ENCODE measurements at regions of chr3 and their contacts with region 1.

Region 1: GRCh38 chr3:48400824-48401433 is 28.9 kb downstream of the FBXW12 start:
- DNase-seq: peak; percentile 89
- CTCF ChIP-seq: peak; percentile 67

Region 2: DNA sequence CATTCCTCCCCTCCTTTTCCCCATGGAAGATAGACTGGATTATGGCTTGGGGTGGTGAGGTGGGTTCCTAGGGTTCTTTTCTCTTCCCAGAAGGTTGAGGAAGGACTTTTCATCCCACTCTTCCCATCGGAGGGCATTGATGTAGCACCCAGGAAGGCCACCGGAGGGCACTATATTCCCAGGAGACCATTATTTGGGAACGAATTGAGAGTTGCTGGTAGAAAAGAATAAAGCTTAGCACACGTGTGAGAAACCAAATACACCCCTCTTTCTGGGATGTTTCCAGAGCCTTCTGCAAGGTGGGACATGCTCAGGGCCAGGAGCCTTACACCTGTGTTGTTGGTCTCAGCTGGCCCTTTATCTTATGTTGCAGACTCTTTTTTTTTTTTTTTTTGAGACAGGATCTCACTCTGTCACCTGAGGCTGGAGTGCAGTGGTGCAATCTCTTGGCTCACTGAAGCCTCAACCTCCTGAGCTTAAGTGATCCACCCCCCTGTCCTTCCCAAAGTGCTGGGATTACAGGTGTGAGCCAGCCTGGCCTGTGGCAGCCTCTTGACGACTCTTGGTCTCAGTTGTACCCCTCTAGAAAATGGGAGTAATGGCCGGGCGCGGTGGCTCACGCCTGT is 206.4 kb before region 1 on chr3:
- in situ Hi-C with region 1: loop called (anchors 10 kb)
- DNase-seq: peak; percentile 74
- CTCF ChIP-seq: peak; percentile 83

Region 3: DNA sequence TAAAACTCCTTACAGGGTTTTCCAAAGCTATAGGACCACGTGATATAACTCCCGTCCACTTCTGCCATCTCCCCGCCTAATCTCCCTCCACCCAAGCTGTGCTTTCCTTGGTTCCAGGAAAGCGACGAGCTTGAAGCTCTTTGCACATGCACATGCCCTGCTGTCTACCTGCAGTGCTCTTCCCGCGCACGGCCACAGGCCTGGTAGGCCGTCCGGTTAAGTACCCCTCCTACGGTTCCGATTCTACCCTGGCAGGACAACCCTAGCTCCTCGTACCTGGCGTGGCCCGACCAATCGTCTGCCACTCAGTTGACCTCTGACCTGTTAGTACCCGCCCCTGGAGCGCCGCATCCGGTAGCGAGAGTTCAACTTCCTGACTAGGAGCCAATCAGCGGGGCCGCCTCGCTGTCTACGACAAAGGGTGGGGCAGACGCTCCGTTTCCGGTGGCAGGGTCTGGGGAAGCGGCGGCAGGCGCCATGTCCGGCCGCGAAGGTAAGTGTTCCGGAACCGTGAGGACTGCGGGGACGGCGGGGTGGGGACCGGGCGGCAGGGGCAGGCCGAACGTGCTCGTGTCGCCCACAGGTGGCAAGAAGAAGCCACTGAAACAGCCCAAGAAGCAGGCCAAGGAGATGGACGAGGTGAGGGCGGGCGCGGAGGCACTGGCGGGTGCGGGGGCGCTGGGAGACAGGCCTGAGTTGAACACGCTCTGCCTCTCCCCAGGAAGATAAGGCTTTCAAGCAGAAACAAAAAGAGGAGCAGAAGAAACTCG is 39.1 kb after region 1 on chr3 and contains the starts of genes CCDC51 and TMA7:
- in situ Hi-C with region 1: loop called (anchors 5 kb)
- DNase-seq: peak; percentile 99
- CTCF ChIP-seq: no peak

Measured in GM13976 (cell line).